Astrocyte of the cerebellum (primary cell): ENCODE measurements at regions of chr11 and their contacts with region 1.

Region 1: DNA sequence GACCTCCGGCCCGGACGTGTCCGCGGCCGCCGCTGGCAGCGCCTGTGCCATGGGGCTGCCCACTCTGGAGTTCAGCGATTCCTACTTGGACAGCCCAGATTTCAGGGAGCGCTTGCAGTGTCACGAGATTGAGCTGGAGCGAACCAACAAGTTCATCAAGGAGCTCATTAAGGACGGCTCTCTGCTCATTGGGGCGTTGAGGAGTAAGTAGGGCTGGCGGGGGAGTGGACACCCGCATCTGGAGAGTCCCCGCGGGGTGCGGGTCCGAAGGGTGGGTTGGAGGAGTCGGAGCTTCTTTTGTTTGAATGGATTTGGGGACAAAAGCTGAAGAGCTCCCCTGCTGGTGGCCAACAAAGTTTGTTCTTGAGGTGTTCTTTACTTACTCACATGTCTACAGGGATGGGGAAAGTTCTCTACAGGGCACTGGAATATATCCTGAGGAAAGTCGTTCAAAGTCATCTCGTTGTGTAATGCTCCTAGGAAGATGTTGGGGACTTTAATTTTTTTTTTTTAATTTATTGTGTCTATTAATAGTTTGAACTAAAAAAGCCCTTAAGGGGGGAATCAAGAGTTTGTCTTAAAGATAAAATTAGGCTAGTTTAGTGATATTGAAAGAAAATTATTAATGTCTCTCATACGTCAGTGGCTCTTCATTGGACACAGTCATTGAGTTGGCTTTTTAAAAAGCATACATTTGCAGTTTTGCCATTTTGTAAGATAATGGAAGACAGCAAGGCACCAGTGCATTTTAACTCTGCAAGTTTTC is 725 bp downstream of the ARHGAP42 start:
- DNase-seq: peak; percentile 76
- H3K4me3 ChIP-seq: peak overlapping the region; percentile 68
- CTCF ChIP-seq: peak; percentile 78

Region 2: DNA sequence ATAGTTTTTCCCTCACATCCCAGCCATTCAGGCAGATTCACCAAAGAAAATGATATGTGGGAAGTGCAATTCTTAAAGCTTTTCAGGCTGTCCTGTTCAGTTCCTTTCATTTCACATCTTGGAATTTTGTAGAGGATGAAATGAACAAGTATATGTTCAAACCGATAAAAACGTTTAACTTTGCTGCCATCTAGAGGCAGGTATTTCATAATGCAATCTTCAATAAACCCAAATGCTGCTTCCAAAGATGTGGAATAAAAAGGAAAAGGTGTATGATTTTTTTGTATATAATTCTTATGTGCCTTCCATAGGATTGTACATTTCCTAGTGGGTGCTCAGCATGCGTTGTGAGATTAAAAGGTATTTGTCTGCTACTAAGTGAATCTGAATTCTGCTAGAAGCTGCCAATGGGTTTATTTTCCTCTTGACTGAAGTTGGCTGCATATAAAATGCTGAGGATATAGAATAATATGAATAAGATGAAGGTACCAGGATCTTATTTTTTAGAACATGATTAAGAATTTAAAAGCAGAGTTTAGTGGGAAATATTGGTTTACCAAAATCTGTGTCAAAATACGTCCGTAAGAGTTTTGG is 242.5 kb after region 1 on chr11:
- in situ Hi-C with region 1: loop called (anchors 25 kb)
- DNase-seq: peak; percentile 76
- H3K4me3 ChIP-seq: no peak overlapping the region
- CTCF ChIP-seq: peak; percentile 11